ENCODE measurements at regions of chr14 and their contacts with region 1.

Region 1: DNA sequence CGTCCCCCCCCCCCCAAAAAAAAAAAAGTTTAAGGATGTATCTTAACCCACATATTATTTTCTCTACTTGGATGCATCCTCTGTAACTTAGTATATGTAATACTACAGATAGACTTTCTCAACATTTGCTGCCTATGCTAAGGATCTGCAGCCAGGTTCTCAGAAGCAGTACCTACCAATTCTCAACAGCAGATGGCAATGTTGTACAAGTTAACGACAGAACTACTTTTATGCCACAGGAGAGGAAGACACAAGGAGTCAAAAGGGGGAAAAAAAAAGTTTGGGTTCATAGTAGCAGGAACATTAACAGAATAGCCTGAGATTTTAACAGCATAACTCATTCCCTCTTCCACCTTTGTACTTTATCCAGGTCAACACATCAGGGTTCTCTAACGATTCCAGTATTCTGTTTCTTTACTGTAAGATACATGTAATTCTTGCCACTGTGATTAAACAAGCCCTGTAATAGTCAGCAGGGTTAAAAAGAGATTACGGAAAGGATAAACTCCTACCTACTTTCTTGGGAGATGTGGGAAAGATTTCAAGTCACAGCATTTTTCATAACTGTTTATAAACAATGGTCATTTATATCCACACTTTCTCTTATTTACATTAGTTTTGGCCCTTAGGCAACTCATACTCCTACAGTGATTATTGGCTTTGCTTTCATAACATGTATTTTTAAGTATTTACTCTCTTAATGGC is 5.7 kb upstream of the NEK9 start:
- DNase-seq: no peak
- ATAC-seq: peak; percentile 77

Region 2: GRCh38 chr14:75205591-75205990 is 73.1 kb after region 1 on chr14:
- intact Hi-C with region 1: no loop called
- DNase-seq: no peak
- ATAC-seq: no peak

Region 3: DNA sequence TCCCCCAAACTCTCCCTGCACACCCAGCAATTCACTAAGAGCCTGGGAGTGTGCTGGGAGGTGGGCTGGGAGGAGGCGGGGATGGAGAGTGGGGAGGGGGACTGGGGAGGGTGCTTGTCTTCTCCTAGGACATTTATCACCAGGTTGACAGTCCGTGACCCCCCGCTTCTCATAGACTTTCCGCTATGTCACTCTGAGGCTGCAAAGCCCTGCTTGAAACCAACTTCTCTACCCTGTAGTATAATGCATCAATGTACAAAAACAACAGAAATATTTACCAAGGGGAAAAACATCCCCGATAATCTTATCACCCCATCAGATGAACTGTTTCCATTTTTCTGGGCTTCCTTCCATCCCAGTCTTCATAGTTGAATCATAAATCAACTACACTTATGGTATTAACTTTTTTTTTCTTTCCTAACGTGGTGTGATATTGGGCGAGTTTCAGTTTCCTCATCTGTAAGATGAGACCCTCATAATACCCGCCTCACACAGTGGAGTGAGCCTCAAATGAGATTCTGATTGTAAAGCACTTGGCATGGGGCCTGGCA is 361.1 kb after region 1 on chr14:
- intact Hi-C with region 1: loop called (anchors 5 kb)
- DNase-seq: no peak
- ATAC-seq: no peak

Measured in Right ventricle myocardium inferior (tissue), 1 donor.